Sciatic nerve (tissue), 2 donors: ENCODE measurements at regions of chr1 and their contacts with region 1.

Region 1: GRCh38 chr1:3283849-3284248 is 170.6 kb upstream of the ARHGEF16 start:
- DNase-seq: peak; percentile 76
- ATAC-seq: peak; percentile 58

Region 2: GRCh38 chr1:3069491-3070303 is 214.2 kb before region 1 on chr1:
- intact Hi-C with region 1: loop called (anchors 5 kb)
- DNase-seq: peak; percentile 76
- ATAC-seq: peak; percentile 57

Region 3: DNA sequence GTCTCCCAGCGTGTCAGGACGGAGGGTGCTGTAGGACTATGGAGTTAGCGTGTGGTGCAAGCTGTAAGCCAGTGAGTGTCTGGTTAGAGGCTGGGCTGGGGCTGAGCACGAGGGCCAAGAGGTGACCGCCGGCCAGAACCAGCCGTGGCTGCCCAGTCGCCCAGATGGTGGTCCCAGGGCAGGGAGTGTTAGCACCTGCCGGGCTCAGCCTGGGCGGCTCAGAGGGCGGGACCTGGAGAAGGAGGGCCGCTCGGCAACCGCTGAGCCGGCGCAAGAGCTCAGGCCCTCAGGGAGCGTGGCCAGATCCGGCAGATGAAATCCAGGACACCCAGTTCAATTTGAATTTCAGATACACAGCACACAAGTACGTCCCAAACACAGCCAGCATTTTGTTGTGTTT is 126.9 kb before region 1 on chr1:
- intact Hi-C with region 1: loop called (anchors 10 kb)
- DNase-seq: no peak
- ATAC-seq: no peak